ENCODE measurements at regions of chr12 and their contacts with region 1.

Region 1: DNA sequence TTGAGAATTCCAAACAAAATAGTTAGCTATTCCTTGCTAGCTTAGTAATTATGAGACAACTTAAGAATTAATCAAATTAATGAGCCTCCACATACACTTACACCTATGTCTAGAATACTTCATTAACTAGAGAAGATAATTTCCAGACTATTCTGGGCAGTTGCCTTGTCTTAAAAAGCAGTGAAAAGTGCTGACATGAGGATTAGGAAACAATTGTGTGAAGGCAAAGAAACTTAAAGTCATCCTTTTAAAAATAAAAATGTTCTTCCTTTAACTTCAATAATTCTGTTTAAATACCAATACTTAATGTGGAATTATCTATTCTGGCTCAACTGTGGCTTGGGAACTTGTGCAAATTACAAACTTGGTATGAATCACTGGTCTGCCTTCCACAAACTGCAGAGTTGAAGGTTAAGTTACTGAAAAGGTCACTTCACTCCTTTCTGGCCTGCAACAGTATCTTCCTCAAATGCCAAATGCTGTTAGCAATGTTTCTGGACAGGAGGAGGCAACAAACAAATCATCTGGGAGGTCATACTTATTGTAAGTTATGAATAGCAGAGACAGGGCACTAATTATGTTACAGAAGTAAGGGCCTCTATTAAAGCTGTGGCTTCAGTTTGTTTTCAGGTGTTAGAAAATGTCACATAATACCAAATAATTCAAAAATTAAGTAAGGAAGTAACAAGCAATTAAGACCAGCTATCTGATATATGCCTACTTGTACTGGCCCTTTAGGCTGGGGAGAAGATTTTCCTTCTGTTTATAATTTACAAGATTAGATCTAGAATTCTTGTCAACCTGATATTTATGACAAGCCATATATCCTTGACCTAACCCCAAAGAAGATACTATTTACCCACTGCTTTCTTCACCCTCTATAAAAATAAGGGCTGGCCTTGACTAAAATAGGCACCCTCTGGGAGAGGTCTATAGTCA is 19.1 kb downstream of the PPTC7 start:
- DNase-seq: no peak
- H3K4me3 Mint-ChIP-seq: no peak overlapping the region
- H3K27ac Mint-ChIP-seq: peak overlapping the region; percentile 54
- H3K4me1 Mint-ChIP-seq: peaks cover 62% of the 10 kb centered on the region
- H3K27me3 Mint-ChIP-seq: no peaks in the 10 kb centered on the region

Region 2: GRCh38 chr12:110548678-110549077 is 15.3 kb before region 1 on chr12:
- CTCF ChIA-PET with region 1: interaction called, 15 read pairs
- POLR2A ChIA-PET with region 1: no interaction called
- DNase-seq: no peak
- H3K4me3 Mint-ChIP-seq: no peak overlapping the region
- H3K27ac Mint-ChIP-seq: no peak overlapping the region
- H3K4me1 Mint-ChIP-seq: peaks cover 37% of the 10 kb centered on the region
- H3K27me3 Mint-ChIP-seq: no peaks in the 10 kb centered on the region

Region 3: DNA sequence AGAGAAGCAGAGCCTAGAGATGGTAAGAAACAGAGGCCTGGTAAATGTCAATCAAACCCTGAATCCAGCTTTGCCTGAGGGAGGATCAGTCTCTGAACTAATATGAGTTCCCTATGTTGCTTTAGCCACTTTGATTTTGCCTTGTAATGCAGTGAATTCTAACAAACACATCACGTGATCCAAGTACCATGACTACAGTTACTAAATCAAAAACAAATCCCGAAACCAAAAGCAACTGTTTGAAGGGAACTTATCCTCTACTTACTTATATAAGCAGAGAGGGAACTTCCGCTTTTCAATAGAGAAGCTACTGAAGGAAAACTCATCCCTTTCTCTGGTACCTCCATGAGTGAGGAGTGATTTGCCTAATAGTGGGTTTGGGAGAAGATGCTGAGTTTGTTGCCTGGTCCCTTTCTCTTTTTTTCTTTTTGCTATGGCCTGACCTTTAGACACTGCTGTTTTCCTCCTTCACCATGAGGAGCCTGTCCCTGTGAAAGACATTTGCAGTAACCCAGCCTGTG is 26.9 kb after region 1 on chr12:
- CTCF ChIA-PET with region 1: interaction called, 6 read pairs
- POLR2A ChIA-PET with region 1: interaction called, 10 read pairs
- DNase-seq: peak; percentile 47
- H3K4me3 Mint-ChIP-seq: peak overlapping the region; percentile 41
- H3K27ac Mint-ChIP-seq: peak overlapping the region; percentile 94
- H3K4me1 Mint-ChIP-seq: peaks cover 28% of the 10 kb centered on the region
- H3K27me3 Mint-ChIP-seq: no peaks in the 10 kb centered on the region

Measured in activated CD4-positive, alpha-beta T cell treated with anti-CD3 and anti-CD28 coated beads, Interleukin-2, amount 10 ng/mL, durations not matched to agents 7 days and 5 days (primary cell).